Mucosa of descending colon (tissue), 3 donors: ENCODE measurements at regions of chr5 and their contacts with region 1.

Region 1: DNA sequence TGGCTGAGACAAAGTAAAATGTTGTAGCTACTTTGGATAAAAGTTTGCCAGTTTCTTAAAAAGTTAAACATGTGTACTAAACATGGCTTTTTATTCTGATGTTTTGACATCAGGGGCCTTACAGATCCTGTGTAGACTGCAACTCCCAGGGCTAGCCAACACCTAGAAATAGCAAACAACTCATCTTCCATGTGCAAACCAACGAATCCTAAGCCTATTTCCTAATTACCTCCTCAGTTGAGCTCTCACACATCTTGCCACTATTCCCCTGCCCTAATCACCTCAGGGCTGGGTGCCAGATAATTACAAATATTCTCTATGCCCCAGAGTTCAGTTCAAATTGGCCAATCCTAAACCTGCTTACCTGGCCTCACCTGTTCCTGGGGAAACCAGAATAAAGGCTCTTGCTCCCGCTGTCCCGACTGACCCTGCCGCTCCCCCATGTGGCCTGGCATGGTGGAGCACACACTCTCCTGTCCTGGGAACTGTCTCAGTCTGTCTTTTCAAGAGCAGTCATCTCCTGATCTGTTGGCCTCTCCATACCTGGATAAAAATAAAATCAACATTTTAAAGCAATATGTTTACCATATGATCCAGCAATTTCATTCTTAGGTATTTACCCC is 37.1 kb upstream of the FAM169A start:
- DNase-seq: peak; percentile 53 to 79 (median 78)
- ATAC-seq: peak; percentile 100
- H3K4me3 ChIP-seq: no peak overlapping the region
- H3K4me1 ChIP-seq: no peaks in the 10 kb centered on the region
- CTCF ChIP-seq: peak; percentile 50

Region 2: GRCh38 chr5:74766849-74767578 is 136.3 kb before region 1 on chr5 and contains the starts of genes GFM2 and NSA2:
- intact Hi-C with region 1: loop called in 1 of 2 experiments (anchors 5 kb)
- DNase-seq: peak; percentile 94 to 98 (median 96)
- ATAC-seq: peak; percentile 98
- H3K4me3 ChIP-seq: peak within 1 kb of the TSS; percentile 81
- H3K4me1 ChIP-seq: peaks cover 25% of the 10 kb centered on the region
- CTCF ChIP-seq: no peak
- total RNA-seq, gene GFM2: 21.4 to 25.1 (median 22.2) TPM
- total RNA-seq, gene NSA2: 48.6 to 62.6 (median 49.9) TPM